ENCODE measurements at regions of chr6 and their contacts with region 1.

Region 1: DNA sequence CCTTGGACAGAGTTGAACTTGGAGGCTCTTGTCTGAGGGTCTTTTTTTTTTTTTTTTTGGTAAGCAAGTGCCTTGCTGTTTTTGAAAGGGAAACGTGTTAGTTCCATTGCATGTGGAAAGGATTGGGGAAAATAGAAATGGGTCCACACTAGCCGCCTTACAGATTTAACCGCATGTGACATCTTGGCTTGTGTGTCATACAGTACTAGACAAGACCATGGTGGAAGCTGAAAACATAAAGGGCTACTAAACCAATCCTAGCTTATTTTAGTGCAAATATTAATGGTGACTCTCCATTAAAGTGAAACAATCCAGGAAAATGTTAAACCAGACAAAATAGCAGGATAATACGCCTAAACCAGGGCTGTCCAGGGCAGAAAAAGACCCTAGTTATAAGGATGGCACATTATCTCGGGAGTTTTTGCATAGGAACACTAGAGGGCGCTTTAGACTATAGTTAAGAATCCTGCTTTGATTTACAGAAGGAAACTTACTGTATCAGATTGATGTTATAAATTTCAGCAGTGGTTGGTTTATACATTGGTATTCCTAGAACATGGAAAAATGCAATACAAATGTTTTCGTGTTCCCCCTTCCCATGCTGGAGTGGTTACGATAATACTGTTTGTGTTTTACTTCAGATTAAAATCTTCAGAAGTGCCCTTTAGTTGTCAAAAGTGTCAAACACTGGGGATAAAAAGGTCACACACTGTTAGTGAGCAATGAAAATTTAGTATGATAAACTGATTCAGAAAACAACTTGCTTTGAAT is 59.8 kb upstream of the DEK start:
- DNase-seq: no peak
- H3K4me3 ChIP-seq: no peak overlapping the region
- H3K27me3 ChIP-seq: no peaks in the 10 kb centered on the region
- CTCF ChIP-seq: peak; percentile 67

Region 2: DNA sequence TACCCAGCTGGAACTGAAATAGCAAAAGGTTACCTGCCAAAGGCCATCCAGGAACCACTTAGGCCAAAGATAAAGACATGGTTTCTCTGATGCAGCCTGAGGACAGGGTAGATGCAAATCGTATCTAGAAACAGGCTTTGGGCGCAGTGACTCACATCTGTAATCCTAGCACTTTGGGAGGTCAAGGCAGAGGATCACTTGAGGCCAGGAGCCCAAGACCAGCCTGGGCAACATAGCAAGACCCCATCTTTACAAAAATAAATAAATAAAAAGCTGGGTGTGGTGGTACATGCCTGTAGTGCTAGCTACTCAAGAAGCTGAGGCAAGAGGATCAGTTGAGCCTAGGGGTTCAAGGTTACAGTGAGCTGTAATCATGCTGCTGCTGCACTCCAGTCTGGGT is 10.1 kb after region 1 on chr6:
- CTCF ChIA-PET with region 1: interaction called, 11 read pairs
- POLR2A ChIA-PET with region 1: no interaction called
- DNase-seq: no peak
- H3K4me3 ChIP-seq: no peak overlapping the region
- H3K27me3 ChIP-seq: no peaks in the 10 kb centered on the region
- CTCF ChIP-seq: no peak

Region 3: GRCh38 chr6:18503593-18504231 is 179.6 kb after region 1 on chr6:
- CTCF ChIA-PET with region 1: interaction called, 131 read pairs
- POLR2A ChIA-PET with region 1: no interaction called
- DNase-seq: peak; percentile 25
- H3K4me3 ChIP-seq: no peak overlapping the region
- H3K27me3 ChIP-seq: no peaks in the 10 kb centered on the region
- CTCF ChIP-seq: peak; percentile 91

Measured in BJ (cell line).